ENCODE measurements at regions of chr3 and their contacts with region 1.

Region 1: GRCh38 chr3:42012935-42013690 is 51.2 kb upstream of the ULK4 start:
- DNase-seq: peak; percentile 74 to 83
- ATAC-seq: peak; percentile 71 to 89 (median 83)
- H3K4me3 ChIP-seq: peak overlapping the region; percentile 40 to 97 (median 88)
- H3K27ac ChIP-seq: peak overlapping the region; percentile 65 to 97 (median 92)
- H3K4me1 ChIP-seq: peaks cover 0 to 50% (median 38%) of the 10 kb centered on the region in 9 donors
- H3K27me3 ChIP-seq: no peaks in the 10 kb centered on the region
- CTCF ChIP-seq: peak in 3 of 9 donors; percentile 12 to 27 (median 19)

Region 2: DNA sequence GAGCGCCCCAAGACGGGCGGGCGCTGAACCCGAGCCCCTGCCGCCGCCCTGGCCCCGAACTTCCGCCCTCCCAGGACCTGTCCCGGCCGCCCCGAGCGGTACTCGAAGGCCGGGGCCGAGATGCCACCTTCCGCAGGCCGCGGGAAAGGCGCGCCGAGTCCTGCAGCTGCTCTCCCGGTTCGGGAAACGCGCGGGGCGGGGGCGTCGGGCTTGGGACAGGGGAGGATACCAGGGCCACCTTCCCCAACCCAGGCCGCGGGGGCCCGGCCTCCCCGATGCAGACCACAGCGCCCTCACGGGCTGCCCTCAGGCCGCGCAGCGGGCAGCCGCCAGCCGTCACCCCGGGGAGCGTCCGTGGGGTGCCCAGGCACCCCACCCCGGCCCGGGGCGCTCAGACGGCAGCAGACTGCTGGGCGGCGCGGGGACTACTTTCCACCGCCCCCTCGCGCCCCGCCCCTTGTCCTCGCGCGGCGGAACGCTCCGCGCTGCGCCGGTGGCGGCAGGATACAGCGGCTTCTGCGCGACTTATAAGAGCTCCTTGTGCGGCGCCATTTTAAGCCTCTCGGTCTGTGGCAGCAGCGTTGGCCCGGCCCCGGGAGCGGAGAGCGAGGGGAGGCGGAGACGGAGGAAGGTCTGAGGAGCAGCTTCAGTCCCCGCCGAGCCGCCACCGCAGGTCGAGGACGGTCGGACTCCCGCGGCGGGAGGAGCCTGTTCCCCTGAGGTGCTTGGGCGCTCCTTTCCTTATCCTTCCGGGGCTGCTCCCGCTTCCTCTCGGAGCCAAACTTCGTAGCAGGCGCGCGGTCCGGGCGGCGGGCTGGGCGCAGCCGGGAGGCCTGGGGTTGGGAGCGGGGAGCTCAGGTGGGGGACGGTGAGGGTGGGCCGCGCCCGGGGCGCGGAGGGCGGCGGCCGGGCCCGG is 813.9 kb before region 1 on chr3 and contains the start of gene CTNNB1:
- intact Hi-C with region 1: loop called in 1 of 10 experiments (anchors 10 kb)
- DNase-seq: peak; percentile 93 to 95
- ATAC-seq: peak; percentile 87 to 98 (median 93)
- H3K4me3 ChIP-seq: peak within 1 kb of the TSS; percentile 63 to 96 (median 80)
- H3K27ac ChIP-seq: peak within 1 kb of the TSS; percentile 89 to 99 (median 98)
- H3K4me1 ChIP-seq: peaks cover 0 to 42% (median 35%) of the 10 kb centered on the region in 9 donors
- H3K27me3 ChIP-seq: no peaks in the 10 kb centered on the region
- CTCF ChIP-seq: peak in 6 of 9 donors; percentile 7 to 43 (median 23)
- total RNA-seq, gene CTNNB1: 148 to 218 (median 181) TPM

Region 3: DNA sequence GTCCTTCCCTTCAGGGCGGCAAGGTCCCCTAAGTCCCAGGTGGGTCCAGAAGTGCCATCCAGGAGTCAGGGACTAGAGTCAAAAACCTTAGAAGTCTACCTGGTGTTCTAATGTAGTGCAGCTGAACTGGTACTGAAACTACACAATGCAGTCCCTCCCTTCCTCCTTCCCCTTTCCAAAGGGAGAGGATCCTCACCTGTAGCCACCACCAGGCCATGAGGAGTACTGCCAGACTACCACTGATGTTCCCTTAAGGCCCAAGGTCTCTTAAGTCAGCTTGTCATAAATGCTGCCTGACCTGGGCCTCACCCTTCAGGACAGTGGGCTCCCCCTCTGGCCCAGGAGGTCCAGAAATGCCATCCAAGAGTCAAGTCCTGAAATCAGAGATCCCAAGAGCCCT is 150.1 kb before region 1 on chr3:
- intact Hi-C with region 1: no loop called
- DNase-seq: no peak
- ATAC-seq: no peak
- H3K4me3 ChIP-seq: no peak overlapping the region
- H3K27ac ChIP-seq: no peak overlapping the region
- H3K4me1 ChIP-seq: no peaks in the 10 kb centered on the region
- H3K27me3 ChIP-seq: no peaks in the 10 kb centered on the region
- CTCF ChIP-seq: no peak

Region 4: DNA sequence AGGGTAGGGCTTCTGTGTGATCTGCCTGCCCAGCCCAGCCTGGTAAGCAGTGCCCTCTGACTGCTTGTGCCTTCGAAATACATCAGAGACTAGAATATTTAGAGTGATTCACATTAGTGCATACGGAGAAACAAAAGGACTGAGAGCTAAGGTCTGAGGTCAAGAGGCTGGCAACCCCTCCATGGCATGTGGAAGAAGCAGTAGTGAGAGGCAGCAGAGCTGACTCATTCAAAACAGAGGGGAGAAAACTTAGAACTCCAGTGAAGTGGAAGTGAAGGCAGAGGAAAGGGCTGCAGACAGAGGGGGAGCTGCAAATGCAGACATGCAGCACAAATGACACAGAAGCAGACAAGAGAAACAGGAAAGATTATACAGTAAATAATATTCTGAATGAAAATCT is 112.8 kb before region 1 on chr3:
- intact Hi-C with region 1: loop called in 6 of 10 experiments (anchors 5 to 10 kb)
- DNase-seq: no peak
- ATAC-seq: no peak
- H3K4me3 ChIP-seq: no peak overlapping the region
- H3K27ac ChIP-seq: peak overlapping the region in 1 of 10 donors; percentile 3
- H3K4me1 ChIP-seq: peaks cover 0 to 22% (median 0%) of the 10 kb centered on the region in 9 donors
- H3K27me3 ChIP-seq: no peaks in the 10 kb centered on the region
- CTCF ChIP-seq: no peak

Region 5: DNA sequence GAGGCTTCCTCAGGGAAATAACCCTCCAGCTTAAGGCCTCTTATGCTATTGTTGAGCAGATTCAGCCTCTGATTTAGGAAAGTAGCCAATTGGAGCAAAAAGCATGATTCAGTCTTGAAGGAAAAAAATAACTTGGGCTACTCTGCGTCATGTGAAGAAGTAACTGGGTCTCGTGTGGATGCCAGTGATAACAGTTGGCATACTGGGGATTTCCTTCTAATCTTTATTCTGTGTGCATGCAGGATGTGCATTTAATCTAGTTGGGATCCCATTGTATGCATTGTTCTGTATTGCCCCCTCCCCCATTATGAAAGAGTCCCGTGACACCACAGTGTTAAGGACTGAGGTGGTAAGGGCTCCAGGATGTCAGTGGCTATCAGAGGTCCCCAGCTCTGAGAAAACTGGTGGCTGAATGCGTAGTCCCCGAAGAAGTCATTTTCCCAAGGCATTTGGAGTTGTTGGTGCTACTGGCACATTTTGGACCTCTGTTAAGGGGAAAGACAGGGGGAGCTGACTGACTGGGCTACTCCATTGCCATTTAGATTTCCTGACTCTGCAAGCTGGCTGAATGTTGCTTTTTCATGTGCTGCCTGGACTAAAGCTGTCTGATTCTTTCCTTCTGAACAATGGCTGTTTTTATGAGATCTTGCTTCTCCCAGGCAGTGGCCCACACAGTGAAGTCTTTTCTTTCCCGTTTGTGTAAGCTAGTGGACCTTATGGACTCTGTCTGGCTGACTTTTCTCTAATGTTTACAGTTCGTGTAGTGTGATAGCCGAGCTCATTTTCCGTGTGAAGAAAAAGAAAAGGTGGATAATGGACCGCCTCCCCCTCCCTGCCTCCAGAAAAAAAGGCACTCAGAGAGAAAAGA is 39.6 kb after region 1 on chr3:
- intact Hi-C with region 1: loop called in 1 of 10 experiments (anchors 5 kb)
- DNase-seq: no peak
- ATAC-seq: peak; percentile 39 to 66 (median 51)
- H3K4me3 ChIP-seq: peak overlapping the region in 3 of 10 donors; percentile 0 to 27 (median 1)
- H3K27ac ChIP-seq: peak overlapping the region; percentile 33 to 95 (median 75)
- H3K4me1 ChIP-seq: peaks cover 22 to 99% (median 69%) of the 10 kb centered on the region in 9 donors
- H3K27me3 ChIP-seq: no peaks in the 10 kb centered on the region
- CTCF ChIP-seq: peak in 3 of 9 donors; percentile 31 to 46 (median 39)

Region 6: GRCh38 chr3:42090973-42091731 is 78.0 kb after region 1 on chr3 and contains the start of gene TRAK1:
- intact Hi-C with region 1: loop called in 3 of 10 experiments (anchors 5 kb)
- DNase-seq: peak; percentile 31 to 49
- ATAC-seq: peak; percentile 65 to 87 (median 78)
- H3K4me3 ChIP-seq: peak within 1 kb of the TSS in 8 of 10 donors; percentile 3 to 37 (median 26)
- H3K27ac ChIP-seq: peak within 1 kb of the TSS; percentile 66 to 92 (median 80)
- H3K4me1 ChIP-seq: peaks cover 5 to 78% (median 44%) of the 10 kb centered on the region in 9 donors
- H3K27me3 ChIP-seq: no peaks in the 10 kb centered on the region
- CTCF ChIP-seq: no peak
- total RNA-seq, gene TRAK1: 182 to 423 (median 320) TPM

Region 7: DNA sequence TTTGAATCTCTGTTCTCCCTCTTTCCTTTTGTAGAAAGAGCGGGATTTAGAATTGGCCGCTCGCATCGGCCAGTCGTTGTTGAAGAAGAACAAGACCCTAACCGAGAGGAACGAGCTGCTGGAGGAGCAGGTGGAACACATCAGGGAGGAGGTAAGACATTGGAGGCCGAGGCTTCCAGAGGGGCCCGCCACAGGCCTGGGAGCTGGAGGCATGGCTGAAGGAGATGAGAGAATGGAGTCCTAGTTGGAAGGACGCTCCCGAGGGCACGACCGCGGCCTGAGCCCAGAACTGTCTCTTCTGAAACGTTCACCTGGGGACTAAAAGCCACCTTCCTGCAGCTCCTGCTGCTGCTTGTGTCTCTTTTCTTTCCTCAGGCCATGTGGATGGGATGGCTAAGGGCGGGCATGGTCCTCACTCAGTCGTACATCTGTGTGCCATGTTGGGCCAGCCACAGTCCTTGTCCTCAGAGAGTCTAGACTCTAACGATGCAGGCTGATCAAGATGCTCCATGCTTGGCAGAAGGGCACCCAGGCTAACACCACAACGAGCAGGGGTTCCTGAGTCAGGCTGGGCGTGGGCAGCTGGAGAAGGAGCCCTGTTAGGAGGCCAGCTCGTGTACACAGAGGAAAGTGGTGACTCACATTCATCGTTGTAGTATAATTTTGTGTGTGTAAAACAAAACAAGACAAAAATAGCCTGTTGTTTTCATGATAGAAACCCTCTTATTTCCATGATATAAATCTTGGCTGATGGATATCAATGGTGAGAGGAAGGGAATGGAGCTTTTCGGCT is 171.7 kb after region 1 on chr3:
- intact Hi-C with region 1: loop called in 7 of 10 experiments (anchors 5 to 10 kb)
- DNase-seq: no peak
- ATAC-seq: no peak
- H3K4me3 ChIP-seq: no peak overlapping the region
- H3K27ac ChIP-seq: peak overlapping the region in 2 of 10 donors; percentile 9 to 30
- H3K4me1 ChIP-seq: peaks cover 0 to 87% (median 58%) of the 10 kb centered on the region in 9 donors
- H3K27me3 ChIP-seq: no peaks in the 10 kb centered on the region
- CTCF ChIP-seq: no peak